ENCODE measurements at regions of chr7 and their contacts with region 1.

Region 1: DNA sequence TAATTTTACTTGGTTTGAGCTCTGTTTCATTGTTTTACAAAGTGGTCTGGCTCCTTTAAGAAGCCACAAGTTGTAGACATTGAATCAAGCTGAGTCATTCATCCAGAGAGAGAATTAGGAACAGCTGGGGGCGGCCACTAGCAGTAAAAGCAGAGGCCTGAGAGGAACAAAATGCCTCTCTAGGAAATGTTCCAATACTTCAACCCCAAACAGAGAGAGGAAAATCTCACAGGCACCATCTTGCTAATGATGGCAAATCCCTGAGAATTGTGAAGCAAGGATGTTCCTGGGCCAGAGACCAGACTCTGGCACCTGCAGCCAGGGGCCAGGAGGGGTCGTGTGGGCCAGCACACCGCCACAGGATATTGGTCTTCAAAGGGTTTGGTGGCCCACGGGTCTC is 26.5 kb upstream of the TRIL start:
- DNase-seq: peak; percentile 66
- H3K4me3 ChIP-seq: no peak overlapping the region
- H3K27ac ChIP-seq: peak overlapping the region; percentile 66
- H3K27me3 ChIP-seq: no peaks in the 10 kb centered on the region
- CTCF ChIP-seq: no peak

Region 2: DNA sequence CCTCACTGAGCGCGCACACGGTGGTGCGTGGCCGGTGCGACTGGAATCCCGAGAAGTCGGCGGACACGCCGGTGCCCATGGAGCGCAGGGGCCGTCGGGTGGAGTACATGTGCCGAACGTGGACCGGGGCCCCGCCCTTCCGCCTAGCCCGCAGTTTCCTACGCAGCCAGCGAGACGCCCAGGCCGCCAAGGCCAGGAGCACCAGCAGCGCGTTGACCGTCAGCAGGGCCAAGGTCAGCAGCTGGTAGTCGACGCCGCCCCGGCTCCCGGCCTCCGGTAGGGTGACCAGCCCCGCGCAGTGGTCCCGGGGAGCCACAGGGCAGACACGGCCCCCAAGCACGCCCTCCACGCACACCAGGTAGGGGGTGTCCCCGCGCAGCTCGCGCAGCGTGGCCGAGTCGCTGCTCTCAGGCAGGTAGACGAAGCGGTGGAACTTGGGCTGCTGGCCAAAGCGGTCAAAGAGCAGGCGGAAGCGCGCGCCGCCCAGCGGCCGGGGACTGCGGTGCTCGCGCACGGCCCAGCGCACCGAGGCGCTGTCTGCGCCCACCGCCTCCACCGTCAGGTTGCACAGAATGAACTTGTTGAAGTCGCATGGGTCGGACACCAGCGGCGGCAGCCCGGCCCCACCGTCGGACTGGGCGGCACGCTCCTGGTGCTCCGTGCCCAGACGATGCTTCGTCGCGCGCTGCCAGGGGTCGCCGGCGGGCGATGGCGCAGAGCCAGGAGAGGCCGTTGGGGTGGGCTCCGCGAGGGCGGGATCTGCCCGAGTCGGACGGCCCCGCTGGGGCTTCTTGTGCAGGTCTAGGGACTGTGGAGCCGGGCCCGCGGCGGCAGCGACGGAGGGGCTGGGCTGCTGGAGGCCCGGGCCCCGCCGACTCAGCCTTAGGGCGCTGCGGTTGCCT is 28.7 kb before region 1 on chr7:
- CTCF ChIA-PET with region 1: interaction called, 12 read pairs
- POLR2A ChIA-PET with region 1: interaction called, 4 read pairs
- DNase-seq: no peak
- H3K4me3 ChIP-seq: peak overlapping the region; percentile 10; the same call in 1 of the 2 replicates
- H3K27ac ChIP-seq: no peak overlapping the region
- H3K27me3 ChIP-seq: peaks cover 57% of the 10 kb centered on the region
- CTCF ChIP-seq: peak; percentile 46

Measured in AG04450 (cell line).